ENCODE measurements at regions of chrX and their contacts with region 1.

Region 1: GRCh38 chrX:13734278-13735172 is at the starts of genes OFD1 and TRAPPC2:
- DNase-seq: peak; percentile 97
- H3K4me3 Mint-ChIP-seq: peak within 1 kb of the TSS; percentile 96
- H3K27ac Mint-ChIP-seq: peak within 1 kb of the TSS; percentile 98
- H3K4me1 Mint-ChIP-seq: peaks cover 17% of the 10 kb centered on the region
- H3K27me3 Mint-ChIP-seq: no peaks in the 10 kb centered on the region
- CTCF ChIP-seq: no peak
- total RNA-seq, gene OFD1: 44.3 and 44.8 TPM in 2 replicates
- total RNA-seq, gene TRAPPC2: 16.5 and 21.7 TPM in 2 replicates

Region 2: GRCh38 chrX:13198056-13198761 is 536.3 kb before region 1 on chrX:
- CTCF ChIA-PET with region 1: no interaction called
- POLR2A ChIA-PET with region 1: no interaction called
- intact Hi-C with region 1: no loop called
- DNase-seq: no peak
- H3K4me3 Mint-ChIP-seq: no peak overlapping the region
- H3K27ac Mint-ChIP-seq: no peak overlapping the region
- H3K4me1 Mint-ChIP-seq: no peaks in the 10 kb centered on the region
- H3K27me3 Mint-ChIP-seq: peaks cover 40% of the 10 kb centered on the region
- CTCF ChIP-seq: no peak

Region 3: GRCh38 chrX:13653022-13653693 is 81.4 kb before region 1 on chrX and contains the start of gene TCEANC:
- CTCF ChIA-PET with region 1: no interaction called
- POLR2A ChIA-PET with region 1: interaction called, 38 read pairs
- intact Hi-C with region 1: loop called (anchors 1 kb)
- DNase-seq: peak; percentile 98
- H3K4me3 Mint-ChIP-seq: peak within 1 kb of the TSS; percentile 89
- H3K27ac Mint-ChIP-seq: peak within 1 kb of the TSS; percentile 59
- H3K4me1 Mint-ChIP-seq: peaks cover 5% of the 10 kb centered on the region
- H3K27me3 Mint-ChIP-seq: peaks cover 20% of the 10 kb centered on the region
- CTCF ChIP-seq: no peak
- total RNA-seq, gene TCEANC: 4.0 TPM in 2 replicates

Region 4: GRCh38 chrX:13669246-13669737 is 65.2 kb before region 1 on chrX:
- CTCF ChIA-PET with region 1: interaction called, 4 read pairs
- POLR2A ChIA-PET with region 1: interaction called, 17 read pairs
- intact Hi-C with region 1: no loop called
- DNase-seq: peak; percentile 99
- H3K4me3 Mint-ChIP-seq: peak overlapping the region; percentile 41
- H3K27ac Mint-ChIP-seq: peak overlapping the region; percentile 90
- H3K4me1 Mint-ChIP-seq: no peaks in the 10 kb centered on the region
- H3K27me3 Mint-ChIP-seq: peaks cover 22% of the 10 kb centered on the region
- CTCF ChIP-seq: no peak

Region 5: DNA sequence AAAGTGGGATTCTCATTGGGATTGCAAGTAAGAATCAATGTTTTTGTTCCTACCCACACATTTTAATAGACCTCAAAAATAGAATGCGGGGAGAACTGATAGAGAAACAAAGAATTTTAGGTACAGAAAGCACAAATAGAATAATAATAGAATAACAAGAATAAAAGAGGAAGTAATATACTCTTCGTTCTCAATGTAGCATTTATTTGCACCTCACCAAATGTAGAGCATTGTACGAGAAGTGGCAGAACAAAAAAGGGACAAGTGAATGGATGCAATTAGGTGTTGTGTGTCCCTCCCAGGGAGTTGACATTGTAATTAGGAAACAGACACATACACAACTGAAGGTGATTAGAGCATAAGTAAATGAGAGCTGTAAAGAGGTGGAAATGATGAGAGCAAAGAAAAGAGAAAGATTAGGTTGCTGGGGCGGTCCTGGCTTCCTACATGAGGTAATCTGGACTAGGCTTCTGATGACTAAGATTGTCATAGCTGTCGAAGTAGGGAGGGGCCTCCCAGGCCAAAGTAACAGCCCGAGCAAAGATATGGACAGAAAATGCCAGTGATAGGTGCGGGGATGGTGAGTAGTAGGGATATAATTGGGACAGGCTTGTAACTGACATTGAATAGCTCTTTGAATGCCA is 35.2 kb before region 1 on chrX:
- CTCF ChIA-PET with region 1: interaction called, 3 read pairs
- POLR2A ChIA-PET with region 1: interaction called, 213 read pairs
- intact Hi-C with region 1: no loop called
- DNase-seq: peak; percentile 61
- H3K4me3 Mint-ChIP-seq: no peak overlapping the region
- H3K27ac Mint-ChIP-seq: no peak overlapping the region
- H3K4me1 Mint-ChIP-seq: peaks cover 40% of the 10 kb centered on the region
- H3K27me3 Mint-ChIP-seq: no peaks in the 10 kb centered on the region
- CTCF ChIP-seq: no peak

Region 6: DNA sequence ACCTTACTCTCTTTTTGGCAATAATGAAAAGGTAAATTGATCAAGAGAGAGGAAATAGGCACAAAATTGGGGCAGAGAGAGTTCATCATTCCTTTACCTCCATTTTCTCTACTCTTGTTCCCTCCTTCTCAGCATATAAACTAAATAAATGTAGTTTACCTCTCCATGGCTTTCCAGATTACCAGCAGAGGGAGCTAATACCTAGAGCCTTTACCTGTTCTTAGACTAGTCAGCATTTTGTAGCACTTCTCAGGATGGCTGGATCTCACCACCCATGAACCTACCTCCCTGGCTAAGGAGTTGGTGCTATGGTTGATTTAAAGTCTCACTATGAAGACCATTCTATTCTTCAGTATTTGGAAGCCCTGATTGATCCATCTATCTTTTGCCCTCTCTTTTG is 15.7 kb after region 1 on chrX:
- CTCF ChIA-PET with region 1: interaction called, 71 read pairs
- POLR2A ChIA-PET with region 1: interaction called, 39 read pairs
- intact Hi-C with region 1: no loop called
- DNase-seq: peak; percentile 77
- H3K4me3 Mint-ChIP-seq: no peak overlapping the region
- H3K27ac Mint-ChIP-seq: no peak overlapping the region
- H3K4me1 Mint-ChIP-seq: peaks cover 6% of the 10 kb centered on the region
- H3K27me3 Mint-ChIP-seq: no peaks in the 10 kb centered on the region
- CTCF ChIP-seq: peak; percentile 62

Region 7: DNA sequence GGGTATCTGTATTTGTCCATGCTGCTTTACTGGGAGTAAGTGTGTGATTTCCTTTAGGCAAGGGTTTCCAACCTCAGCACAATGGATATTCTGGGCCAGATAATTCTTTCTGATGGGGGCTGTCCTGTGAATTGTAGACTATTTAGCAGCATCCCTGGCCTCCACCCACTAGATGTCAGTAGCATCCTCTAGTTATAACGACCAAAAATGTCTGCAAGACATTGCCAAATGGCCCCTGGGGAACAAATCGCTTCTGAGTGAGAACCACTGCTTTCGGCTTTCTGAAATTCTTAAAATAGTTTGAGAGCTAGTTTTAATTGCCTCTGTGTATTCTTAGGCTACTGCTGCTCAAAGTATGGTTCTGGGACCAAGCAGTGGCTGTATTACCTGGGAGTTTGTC is 163.6 kb after region 1 on chrX:
- CTCF ChIA-PET with region 1: interaction called, 4 read pairs
- POLR2A ChIA-PET with region 1: interaction called, 11 read pairs
- intact Hi-C with region 1: no loop called
- DNase-seq: peak; percentile 62
- H3K4me3 Mint-ChIP-seq: no peak overlapping the region
- H3K27ac Mint-ChIP-seq: peak overlapping the region; percentile 83
- H3K4me1 Mint-ChIP-seq: peaks cover 34% of the 10 kb centered on the region
- H3K27me3 Mint-ChIP-seq: peaks cover 13% of the 10 kb centered on the region
- CTCF ChIP-seq: no peak

Region 8: DNA sequence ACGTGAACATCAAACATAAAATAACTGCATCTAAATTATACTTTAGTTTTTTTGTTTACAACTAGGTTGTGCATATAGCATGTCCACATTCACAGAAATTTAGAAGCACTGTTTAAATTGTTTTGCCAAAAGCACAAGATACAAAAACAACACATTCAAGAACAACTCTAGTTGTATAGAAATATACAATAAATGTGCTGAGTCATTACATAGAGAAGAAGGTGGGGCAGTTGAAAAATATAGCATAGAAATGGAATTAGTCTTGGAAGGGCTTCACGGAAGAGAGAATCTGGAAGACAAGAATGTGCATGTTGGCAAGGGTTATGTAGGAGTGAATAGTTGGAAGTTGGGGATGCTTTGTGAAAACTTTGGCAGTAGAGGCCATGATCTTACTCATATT is 555.8 kb after region 1 on chrX:
- CTCF ChIA-PET with region 1: no interaction called
- POLR2A ChIA-PET with region 1: no interaction called
- intact Hi-C with region 1: no loop called
- DNase-seq: no peak
- H3K4me3 Mint-ChIP-seq: no peak overlapping the region
- H3K27ac Mint-ChIP-seq: no peak overlapping the region
- H3K4me1 Mint-ChIP-seq: no peaks in the 10 kb centered on the region
- H3K27me3 Mint-ChIP-seq: peaks cover 18% of the 10 kb centered on the region
- CTCF ChIP-seq: no peak